Activated naive CD4-positive, alpha-beta T cell treated with anti-CD3 and anti-CD28 coated beads for 36 hours (primary cell): ENCODE measurements at regions of chr17 and their contacts with region 1.

Region 1: DNA sequence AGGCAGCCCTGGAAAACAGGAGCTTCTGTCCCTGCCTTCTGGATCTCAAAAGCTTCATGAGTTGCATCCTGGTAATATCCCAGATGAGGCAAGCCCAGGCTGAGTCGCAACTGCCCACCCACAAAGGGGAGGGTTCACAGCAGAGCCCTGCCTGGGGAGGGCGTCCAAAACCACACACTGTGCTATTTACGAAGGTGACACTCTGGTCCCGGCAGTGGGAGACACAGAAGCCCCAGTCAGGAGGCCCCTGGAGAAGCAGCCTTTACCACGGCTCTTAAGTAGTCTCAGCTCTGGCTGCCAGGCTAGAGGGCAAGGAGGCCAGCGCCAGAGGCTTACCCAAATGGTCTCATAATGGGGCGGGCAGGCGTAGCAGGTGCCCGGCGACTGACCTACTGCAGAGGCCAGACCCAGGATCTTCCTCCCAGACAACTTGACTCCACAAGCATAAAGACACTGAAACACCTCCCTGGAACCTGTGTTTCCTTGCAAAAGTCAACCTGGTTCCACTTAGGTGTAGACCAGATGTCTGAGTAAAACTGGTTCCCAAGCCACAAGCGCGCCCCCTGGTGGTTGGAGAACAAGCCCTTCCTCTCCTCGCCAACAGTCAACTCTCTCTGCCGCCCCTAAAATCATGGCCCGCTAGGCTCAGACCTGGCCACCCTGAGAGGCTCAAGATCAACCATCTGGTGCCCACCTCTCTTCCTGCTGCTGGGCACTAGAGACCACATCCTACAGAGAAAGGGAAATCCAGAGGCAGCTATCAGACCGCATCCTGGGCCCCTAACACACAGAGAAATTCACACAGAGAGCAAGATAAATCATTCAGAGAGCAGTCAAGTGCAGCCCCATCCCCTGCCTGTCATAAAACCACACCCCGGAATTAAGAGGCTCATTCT is 5.2 kb downstream of the AXIN2 start:
- DNase-seq: peak; percentile 95
- H3K4me3 Mint-ChIP-seq: no peak overlapping the region
- H3K27ac Mint-ChIP-seq: no peak overlapping the region
- H3K4me1 Mint-ChIP-seq: peaks cover 35% of the 10 kb centered on the region
- H3K27me3 Mint-ChIP-seq: peaks cover 2% of the 10 kb centered on the region

Region 2: DNA sequence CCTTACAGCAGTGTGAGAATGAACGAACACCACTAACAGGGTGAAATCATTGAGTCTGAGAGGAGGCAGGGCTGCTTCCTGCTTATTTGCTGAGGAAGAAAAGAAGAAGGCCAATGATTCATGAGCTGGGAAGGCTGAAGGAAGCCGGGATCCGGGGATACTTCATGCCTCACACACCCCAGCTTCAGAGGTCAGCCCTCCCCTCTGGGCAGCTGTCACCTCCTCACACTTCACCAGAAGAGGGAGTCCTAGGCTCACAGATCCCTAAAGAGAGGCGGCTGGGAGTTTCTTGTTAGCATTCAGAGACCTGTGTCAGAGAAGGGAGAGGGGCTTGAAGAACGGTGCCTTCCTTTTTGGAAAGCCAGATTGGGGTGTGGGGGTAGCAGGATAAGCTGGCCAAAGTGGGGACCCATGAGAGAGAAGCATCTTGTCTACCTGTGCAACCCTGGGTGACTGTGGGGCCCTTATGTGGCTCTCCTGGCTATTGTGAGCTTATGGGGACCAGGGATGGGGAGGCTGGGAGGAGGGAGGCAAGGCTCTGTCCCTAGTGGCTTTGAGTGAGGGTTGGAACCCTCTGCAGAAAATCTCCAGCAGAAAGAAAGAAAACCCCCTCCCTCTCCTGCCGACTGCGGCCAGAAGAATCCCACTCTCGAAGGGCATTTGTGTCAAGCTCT is 324.5 kb before region 1 on chr17:
- CTCF ChIA-PET with region 1: interaction called, 9 read pairs
- intact Hi-C with region 1: loop called (anchors 1 kb)
- DNase-seq: peak; percentile 74
- H3K4me3 Mint-ChIP-seq: no peak overlapping the region
- H3K27ac Mint-ChIP-seq: no peak overlapping the region
- H3K4me1 Mint-ChIP-seq: peaks cover 27% of the 10 kb centered on the region
- H3K27me3 Mint-ChIP-seq: peaks cover 15% of the 10 kb centered on the region

Region 3: GRCh38 chr17:65359016-65359415 is 197.2 kb before region 1 on chr17:
- CTCF ChIA-PET with region 1: no interaction called
- intact Hi-C with region 1: loop called (anchors 1 kb)
- DNase-seq: peak; percentile 78
- H3K4me3 Mint-ChIP-seq: no peak overlapping the region
- H3K27ac Mint-ChIP-seq: no peak overlapping the region
- H3K4me1 Mint-ChIP-seq: peaks cover 20% of the 10 kb centered on the region
- H3K27me3 Mint-ChIP-seq: no peaks in the 10 kb centered on the region

Region 4: GRCh38 chr17:65523853-65524664 is 32.2 kb before region 1 on chr17:
- CTCF ChIA-PET with region 1: interaction called, 3 read pairs
- intact Hi-C with region 1: loop called (anchors 1 kb)
- DNase-seq: no peak
- H3K4me3 Mint-ChIP-seq: no peak overlapping the region
- H3K27ac Mint-ChIP-seq: peak overlapping the region; percentile 24
- H3K4me1 Mint-ChIP-seq: peaks cover 29% of the 10 kb centered on the region
- H3K27me3 Mint-ChIP-seq: no peaks in the 10 kb centered on the region

Region 5: DNA sequence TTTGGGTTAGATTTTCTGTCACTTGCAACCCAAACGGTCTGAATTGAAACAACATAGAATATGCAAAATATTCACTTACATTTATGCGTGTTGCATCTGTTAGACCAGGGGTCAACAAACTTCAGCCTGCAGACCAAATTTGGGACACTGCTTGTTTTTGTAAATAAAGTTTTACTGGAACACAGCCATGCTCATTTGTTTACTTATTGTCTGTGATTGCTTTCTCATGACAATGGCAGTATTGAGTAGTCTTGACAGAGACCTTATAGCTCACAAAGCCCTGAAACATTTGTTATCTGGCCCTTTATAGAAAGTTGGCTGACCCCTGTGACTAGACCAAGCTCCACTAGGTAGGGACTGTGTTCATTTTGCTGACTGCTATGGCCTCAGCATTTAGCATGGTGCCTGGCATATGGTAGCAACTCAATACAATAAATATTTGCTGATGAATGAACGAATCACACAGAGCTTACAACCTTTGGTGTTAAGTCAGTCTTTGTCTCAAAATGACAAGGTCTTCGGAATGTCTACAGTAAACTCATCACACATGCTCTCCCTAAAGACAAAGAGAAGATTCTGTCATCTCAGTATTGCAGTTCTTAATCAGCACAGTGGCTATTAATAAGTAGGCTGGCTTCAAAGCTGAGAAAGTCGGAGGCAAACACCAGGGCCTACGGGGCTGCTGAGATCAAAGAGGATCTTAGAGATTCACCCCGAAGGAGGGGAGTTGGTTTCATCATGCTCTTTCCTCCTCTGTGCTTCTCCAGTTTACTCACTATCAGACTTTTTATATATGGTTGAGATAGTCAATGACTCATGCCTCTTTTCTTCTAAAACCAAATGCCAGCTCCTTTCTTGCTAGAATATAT is 100.4 kb after region 1 on chr17:
- CTCF ChIA-PET with region 1: no interaction called
- intact Hi-C with region 1: loop called (anchors 1 kb)
- DNase-seq: peak; percentile 84
- H3K4me3 Mint-ChIP-seq: no peak overlapping the region
- H3K27ac Mint-ChIP-seq: peak overlapping the region; percentile 56
- H3K4me1 Mint-ChIP-seq: peaks cover 35% of the 10 kb centered on the region
- H3K27me3 Mint-ChIP-seq: peaks cover 9% of the 10 kb centered on the region

Region 6: DNA sequence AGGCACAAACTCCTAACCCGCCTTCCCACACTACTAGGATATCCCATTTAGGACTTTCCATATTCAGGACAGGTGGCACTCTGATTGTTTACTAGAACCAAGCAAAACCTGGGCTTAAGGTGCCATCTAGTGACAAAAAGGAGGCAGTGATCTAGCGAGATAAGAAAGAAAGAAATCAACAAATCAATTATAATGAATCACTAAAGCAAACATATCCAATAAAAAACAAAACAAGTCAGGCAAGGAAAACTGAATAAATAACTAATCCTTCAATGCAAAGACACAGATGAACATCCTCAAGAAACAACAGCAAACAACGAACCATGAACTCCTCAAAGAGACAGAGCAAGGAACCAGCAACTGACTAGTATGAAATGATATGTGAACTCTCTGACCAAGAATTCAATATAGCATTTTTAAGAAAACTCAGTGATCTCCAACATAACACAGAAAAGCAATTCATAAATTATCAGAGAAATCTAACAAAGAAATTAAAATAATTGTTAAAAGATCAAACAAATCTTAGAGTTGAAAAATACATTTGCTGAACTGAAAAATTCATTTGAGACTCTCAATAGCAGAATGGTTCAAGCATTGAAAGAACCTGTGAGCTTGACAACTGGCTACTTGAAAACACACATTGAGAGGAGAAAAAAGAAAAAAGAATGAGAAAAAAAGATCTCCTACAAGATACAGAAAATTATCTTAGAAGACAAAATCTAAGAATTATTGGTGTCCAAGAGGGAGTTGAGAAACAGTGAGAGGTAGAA is 432.0 kb after region 1 on chr17:
- CTCF ChIA-PET with region 1: no interaction called
- intact Hi-C with region 1: loop called (anchors 1 kb)
- DNase-seq: peak; percentile 20
- H3K4me3 Mint-ChIP-seq: no peak overlapping the region
- H3K27ac Mint-ChIP-seq: no peak overlapping the region
- H3K4me1 Mint-ChIP-seq: no peaks in the 10 kb centered on the region
- H3K27me3 Mint-ChIP-seq: peaks cover 2% of the 10 kb centered on the region